HEK293 (cell line): ENCODE measurements at regions of chr11 and their contacts with region 1.

Region 1: DNA sequence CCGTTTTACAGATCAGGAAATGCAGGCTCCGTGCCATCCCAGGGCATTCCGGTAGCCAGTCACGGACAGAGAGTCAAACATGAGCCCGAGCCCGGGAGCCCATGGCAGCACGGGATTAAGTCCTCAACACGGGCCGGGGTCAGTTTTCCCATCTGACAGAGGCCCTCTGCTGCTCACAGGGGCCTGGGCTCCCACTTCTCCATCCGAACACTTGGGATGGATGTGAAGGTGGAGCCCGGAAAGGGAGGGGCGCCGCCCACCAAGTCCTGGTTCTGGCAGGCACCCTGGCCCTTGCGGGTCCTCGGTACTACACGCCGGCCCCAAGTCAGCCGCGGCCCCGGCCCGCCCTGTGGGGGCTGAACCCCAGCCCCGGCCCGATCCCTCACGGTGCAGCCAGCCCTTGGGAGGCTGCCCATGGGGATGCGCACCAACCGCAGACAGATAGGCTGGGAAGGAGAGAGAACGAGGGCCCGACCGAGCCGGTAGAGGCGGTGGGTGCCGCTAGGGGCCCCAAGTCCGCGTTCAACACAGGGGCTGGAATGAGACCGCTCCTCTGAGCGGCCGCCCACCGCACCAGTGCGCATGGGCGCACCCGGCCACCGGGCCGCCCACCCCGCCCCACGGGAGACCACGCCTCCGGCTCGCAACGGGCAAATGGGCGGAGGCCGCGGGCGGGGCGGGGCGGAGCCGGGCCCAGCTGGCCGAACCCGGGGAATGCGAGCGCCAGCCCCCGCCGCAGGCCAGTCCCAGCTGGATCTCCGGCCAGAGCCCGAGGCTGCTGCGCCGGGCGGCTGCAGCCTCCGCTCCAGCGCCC is at the start of gene CAPN5:
- H3K4me3 ChIP-seq: peak within 1 kb of the TSS; percentile 64
- H3K27ac ChIP-seq: no peak within 1 kb of the TSS; the same call in 1 of the 2 replicates
- H3K4me1 ChIP-seq: no peaks in the 10 kb centered on the region
- CTCF ChIP-seq: peak; percentile 48

Region 2: GRCh38 chr11:77047007-77047927 is 19.2 kb before region 1 on chr11:
- CTCF ChIA-PET with region 1: interaction called, 14 read pairs
- POLR2A ChIA-PET with region 1: interaction called, 4 read pairs
- H3K4me3 ChIP-seq: peak overlapping the region; percentile 36
- H3K27ac ChIP-seq: no peak overlapping the region
- H3K4me1 ChIP-seq: no peaks in the 10 kb centered on the region
- CTCF ChIP-seq: peak; percentile 54

Region 3: DNA sequence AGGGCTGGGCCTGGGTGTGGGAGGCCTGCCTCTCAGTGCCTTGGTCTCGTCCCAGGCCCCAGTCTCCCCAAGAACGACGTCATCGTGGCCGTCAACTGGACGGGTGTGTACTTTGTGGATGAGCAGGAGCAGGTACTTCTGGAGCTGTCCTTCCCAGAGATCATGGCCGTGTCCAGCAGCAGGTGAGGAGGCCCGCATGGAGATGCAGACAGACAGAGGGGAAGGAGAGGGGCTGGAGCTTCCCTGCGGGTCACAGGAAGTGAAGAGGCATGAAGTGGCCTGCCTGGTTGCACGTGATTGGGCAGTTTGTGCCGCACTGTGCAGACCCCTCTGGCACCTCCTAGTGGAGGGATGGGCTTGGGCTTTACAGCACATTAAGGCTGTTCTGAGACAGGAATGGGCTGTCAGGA is 132.0 kb after region 1 on chr11:
- CTCF ChIA-PET with region 1: no interaction called
- POLR2A ChIA-PET with region 1: no interaction called
- H3K4me3 ChIP-seq: no peak overlapping the region
- H3K27ac ChIP-seq: no peak overlapping the region
- H3K4me1 ChIP-seq: no peaks in the 10 kb centered on the region
- CTCF ChIP-seq: 0 out of 2 replicates have a peak, but pooled peaks have one; percentile 17